Sciatic nerve (tissue), 2 donors: ENCODE measurements at regions of chr18 and their contacts with region 1.

Region 1: DNA sequence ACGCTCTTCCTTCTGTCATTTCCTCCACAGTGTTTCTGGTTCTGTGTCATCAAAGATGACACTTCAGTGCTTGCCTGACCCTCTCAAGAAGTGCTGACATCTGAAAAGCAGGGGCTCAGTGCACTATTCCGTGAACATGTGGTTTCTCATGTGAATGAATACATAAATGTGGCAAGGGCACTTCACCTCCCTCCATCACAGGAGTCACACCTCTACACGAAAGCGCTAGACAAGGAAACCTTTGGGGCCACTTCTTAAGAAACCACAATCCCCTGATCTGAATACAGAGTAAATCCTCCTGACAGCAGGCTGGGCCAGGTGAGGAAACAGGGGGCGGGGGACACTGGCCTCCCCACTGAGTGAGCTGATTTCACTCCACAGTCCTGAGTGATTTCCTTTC is 145.8 kb upstream of the ACAA2 start:
- DNase-seq: no peak
- ATAC-seq: no peak

Region 2: DNA sequence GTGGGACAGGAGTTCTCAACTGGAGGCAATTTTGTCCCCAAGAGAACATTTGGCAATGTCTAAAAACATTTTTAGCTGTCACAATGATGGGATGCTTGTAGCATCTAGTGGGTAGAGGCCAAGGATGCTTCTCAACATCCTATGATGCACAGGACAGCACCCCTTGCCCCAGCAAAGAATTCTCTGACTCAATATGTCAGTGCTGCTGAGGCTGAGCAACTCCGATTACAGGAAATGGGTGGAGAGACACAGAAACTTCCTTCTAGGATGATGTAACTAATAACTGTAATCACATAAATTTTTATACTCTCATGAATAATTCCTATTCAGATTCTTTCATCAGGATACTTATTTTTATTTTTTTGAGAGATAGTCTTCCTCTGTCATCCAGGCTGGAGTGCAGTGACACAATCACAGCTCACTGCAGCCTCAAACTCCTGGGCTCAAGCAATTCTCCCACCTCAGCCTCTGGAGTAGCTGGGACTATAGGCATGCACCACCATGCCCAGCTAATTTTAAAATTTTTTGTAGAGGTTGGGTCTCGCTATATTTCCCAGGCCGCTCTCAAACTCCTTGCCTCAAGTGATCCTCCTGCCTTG is 25.5 kb before region 1 on chr18:
- intact Hi-C with region 1: loop called (anchors 1 kb)
- DNase-seq: no peak
- ATAC-seq: no peak

Region 3: GRCh38 chr18:50194631-50195532 is 235.7 kb after region 1 on chr18 and contains the start of gene MYO5B:
- intact Hi-C with region 1: no loop called
- DNase-seq: no peak
- ATAC-seq: peak; percentile 70
- total RNA-seq, gene MYO5B: 9.9 TPM